CD8-positive, alpha-beta memory T cell (primary cell): ENCODE measurements at regions of chr15 and their contacts with region 1.

Region 1: DNA sequence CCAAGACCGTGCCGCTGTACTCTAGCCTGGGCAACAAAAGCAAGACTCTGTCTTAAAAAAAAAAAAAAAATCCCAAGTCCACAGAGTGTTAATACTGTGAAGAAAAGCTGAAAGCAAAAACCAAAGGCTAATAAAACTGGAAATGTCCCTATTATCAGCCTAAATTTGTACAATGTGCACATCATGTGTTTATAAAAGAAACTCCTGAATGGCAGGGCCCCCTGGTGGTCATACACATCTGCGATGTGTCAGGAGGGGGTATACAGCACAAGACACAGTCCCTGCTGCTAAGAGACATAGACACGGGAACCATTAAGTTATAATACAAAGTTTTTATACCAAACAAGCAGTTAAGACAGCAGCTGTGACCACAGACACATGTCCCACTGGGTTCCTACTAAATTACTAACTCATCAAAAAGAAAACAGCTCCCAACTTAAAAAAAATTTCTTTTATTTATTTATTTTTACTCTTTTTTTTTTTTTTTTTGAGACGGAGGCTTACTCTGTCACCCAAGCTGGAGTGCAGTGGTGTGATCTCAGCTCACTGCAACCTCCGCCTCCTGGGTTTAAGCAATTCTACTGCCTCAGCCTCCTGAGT is 31.0 kb downstream of the IDH2 start:
- DNase-seq: peak; percentile 59 to 86 (median 65)
- H3K4me3 ChIP-seq: no peak overlapping the region
- H3K4me3 Mint-ChIP-seq: no peak overlapping the region
- H3K27ac ChIP-seq: no peak overlapping the region
- H3K27ac Mint-ChIP-seq: peak overlapping the region in 5 of 8 donors; percentile 3 to 79 (median 70)
- H3K4me1 ChIP-seq: no peaks in the 10 kb centered on the region
- H3K4me1 Mint-ChIP-seq: peaks cover 3 to 7% (median 4%) of the 10 kb centered on the region in 3 donors
- H3K27me3 ChIP-seq: no peaks in the 10 kb centered on the region
- H3K27me3 Mint-ChIP-seq: no peaks in the 10 kb centered on the region

Region 2: DNA sequence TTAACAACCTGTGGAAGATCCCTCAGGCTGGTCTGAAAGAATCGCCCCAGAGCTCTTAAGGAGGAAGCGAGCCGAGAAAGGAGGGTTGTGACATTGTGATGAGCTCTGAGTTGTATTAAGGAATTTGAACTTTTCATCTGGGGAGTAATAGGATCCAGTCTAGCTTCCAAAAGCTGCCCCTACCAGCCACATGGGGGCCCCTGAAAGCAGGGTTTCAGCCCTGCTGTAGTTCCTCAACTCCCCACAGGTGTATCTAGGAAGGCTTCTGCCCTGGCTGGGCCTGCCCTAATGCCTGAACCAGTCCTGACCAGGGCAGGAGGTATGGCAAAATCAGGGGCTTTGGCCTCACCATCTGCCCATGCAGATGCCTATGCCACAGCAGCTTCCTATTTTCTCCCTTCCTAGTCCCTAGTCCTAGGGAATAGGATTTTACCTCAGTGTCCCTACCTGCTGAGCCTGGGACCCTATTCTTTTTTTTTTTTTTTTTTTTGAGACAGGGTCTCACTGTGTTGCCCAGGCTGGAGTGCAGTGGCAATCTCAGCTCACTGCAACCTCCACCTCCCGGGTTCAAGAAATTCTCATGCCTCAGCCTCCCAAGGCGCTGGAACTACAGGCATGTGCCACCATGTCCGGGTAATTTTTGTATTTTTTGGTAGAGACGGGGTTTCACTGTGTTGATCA is 172.6 kb before region 1 on chr15:
- CTCF ChIA-PET with region 1: interaction called, 20 read pairs
- POLR2A ChIA-PET with region 1: no interaction called
- DNase-seq: peak in 3 of 5 donors; percentile 20 to 60 (median 49)
- H3K4me3 ChIP-seq: no peak overlapping the region
- H3K4me3 Mint-ChIP-seq: no peak overlapping the region
- H3K27ac ChIP-seq: no peak overlapping the region
- H3K27ac Mint-ChIP-seq: no peak overlapping the region
- H3K4me1 ChIP-seq: no peaks in the 10 kb centered on the region
- H3K4me1 Mint-ChIP-seq: peaks cover 10 to 15% (median 13%) of the 10 kb centered on the region in 3 donors
- H3K27me3 ChIP-seq: no peaks in the 10 kb centered on the region
- H3K27me3 Mint-ChIP-seq: peaks cover 3 to 15% of the 10 kb centered on the region in 2 donors

Region 3: GRCh38 chr15:90086868-90087268 is 15.6 kb after region 1 on chr15:
- CTCF ChIA-PET with region 1: interaction called, 11 read pairs
- POLR2A ChIA-PET with region 1: no interaction called
- DNase-seq: peak in 2 of 5 donors; percentile 18 to 62
- H3K4me3 ChIP-seq: no peak overlapping the region
- H3K4me3 Mint-ChIP-seq: peak overlapping the region in 1 of 7 donors; percentile 45
- H3K27ac ChIP-seq: no peak overlapping the region
- H3K27ac Mint-ChIP-seq: peak overlapping the region; percentile 15 to 86 (median 74)
- H3K4me1 ChIP-seq: no peaks in the 10 kb centered on the region
- H3K4me1 Mint-ChIP-seq: peaks cover 8 to 26% (median 11%) of the 10 kb centered on the region in 3 donors
- H3K27me3 ChIP-seq: no peaks in the 10 kb centered on the region
- H3K27me3 Mint-ChIP-seq: no peaks in the 10 kb centered on the region